Right ventricle myocardium superior (tissue), 1 donor: ENCODE measurements at regions of chr10 and their contacts with region 1.

Region 1: GRCh38 chr10:132387764-132388210 is 9.2 kb upstream of the PWWP2B start:
- DNase-seq: peak; percentile 87
- ATAC-seq: peak; percentile 78

Region 2: GRCh38 chr10:132452631-132453469 is 65.1 kb after region 1 on chr10:
- intact Hi-C with region 1: loop called (anchors 1 kb)
- DNase-seq: peak; percentile 90
- ATAC-seq: peak; percentile 89